HepG2 (cell line): ENCODE measurements at regions of chr7 and their contacts with region 1.

Region 1: GRCh38 chr7:82572195-82572880 is 128.8 kb upstream of the CACNA2D1 start:
- DNase-seq: peak; percentile 70
- ATAC-seq: peak; percentile 95
- H3K4me3 ChIP-seq: no peak overlapping the region
- H3K27ac ChIP-seq: no peak overlapping the region
- H3K4me1 ChIP-seq: no peaks in the 10 kb centered on the region
- H3K27me3 ChIP-seq: no peaks in the 10 kb centered on the region
- CTCF ChIP-seq: peak; percentile 83
- EP300 ChIP-seq: no peak
- POLR2A ChIP-seq: no peak
- RAD21 ChIP-seq: no peak

Region 2: DNA sequence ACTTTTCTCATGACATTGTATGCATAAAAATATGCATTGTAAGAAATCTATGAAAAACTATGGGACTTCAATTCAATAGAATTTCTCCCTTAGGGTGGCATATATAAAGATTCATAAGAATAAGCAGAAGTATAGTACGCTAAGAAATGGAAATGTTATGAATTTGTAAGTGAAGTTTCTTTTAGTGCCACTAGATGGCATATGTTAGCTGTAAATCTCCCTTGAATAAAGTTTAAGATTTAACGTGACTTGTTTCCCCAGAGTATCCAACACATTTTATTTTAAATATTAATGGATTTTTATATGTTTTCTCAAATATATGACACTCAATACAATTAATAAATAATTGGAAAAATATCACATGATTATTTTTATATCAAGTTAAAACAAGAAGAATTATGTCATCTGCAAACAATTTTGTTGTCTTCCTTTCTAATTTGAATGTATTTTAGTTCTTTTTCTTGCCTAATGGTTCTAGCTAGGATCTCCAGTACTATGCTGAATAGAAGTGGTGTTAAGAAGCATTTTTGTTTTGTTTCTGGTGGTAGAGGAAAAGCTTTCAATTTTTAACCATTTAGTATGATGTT is 1089.6 kb before region 1 on chr7:
- CTCF ChIA-PET with region 1: no interaction called
- POLR2A ChIA-PET with region 1: no interaction called
- in situ Hi-C with region 1: loop called (anchors 25 kb)
- intact Hi-C with region 1: loop called (anchors 1 kb)
- DNase-seq: peak; percentile 4
- ATAC-seq: no peak
- H3K4me3 ChIP-seq: no peak overlapping the region
- H3K27ac ChIP-seq: no peak overlapping the region
- H3K4me1 ChIP-seq: peaks cover 14% of the 10 kb centered on the region
- H3K27me3 ChIP-seq: no peaks in the 10 kb centered on the region
- CTCF ChIP-seq: peak; percentile 47
- EP300 ChIP-seq: no peak
- POLR2A ChIP-seq: no peak
- RAD21 ChIP-seq: no peak

Region 3: DNA sequence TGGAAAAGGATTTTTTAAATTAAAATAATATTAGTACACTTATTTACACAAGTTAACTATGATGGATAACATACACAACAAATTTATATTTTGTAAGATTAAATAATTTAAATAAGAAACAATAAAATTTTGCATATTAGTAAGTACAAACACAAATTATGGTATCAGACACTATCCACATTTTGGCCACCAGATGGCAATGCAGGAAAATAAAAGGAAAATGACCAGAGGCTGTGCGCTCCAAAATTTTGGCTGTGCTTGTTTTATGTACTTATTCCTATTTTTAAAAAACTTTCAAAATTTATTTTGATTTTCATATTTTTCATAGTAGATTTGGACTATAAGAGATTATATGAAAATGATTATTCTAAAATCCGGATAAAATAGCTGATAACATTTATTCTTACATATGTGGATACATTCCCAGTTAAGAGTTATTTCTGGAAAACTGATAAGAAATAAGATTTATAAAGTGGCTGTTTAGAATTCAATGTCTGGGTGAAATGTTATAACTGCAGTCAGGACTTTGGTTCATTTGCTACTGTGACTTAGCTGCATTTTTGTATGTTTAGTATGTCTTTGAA is 527.7 kb before region 1 on chr7:
- CTCF ChIA-PET with region 1: interaction called, 17 read pairs
- POLR2A ChIA-PET with region 1: no interaction called
- in situ Hi-C with region 1: loop called (anchors 10 kb)
- intact Hi-C with region 1: loop called (anchors 1 kb)
- DNase-seq: peak; percentile 21
- ATAC-seq: no peak
- H3K4me3 ChIP-seq: no peak overlapping the region
- H3K27ac ChIP-seq: no peak overlapping the region
- H3K4me1 ChIP-seq: no peaks in the 10 kb centered on the region
- H3K27me3 ChIP-seq: no peaks in the 10 kb centered on the region
- CTCF ChIP-seq: peak; percentile 56
- EP300 ChIP-seq: no peak
- POLR2A ChIP-seq: no peak
- RAD21 ChIP-seq: 0 out of 2 replicates have a peak, but pooled peaks have one; percentile 28

Region 4: GRCh38 chr7:82172017-82172416 is 400.3 kb before region 1 on chr7:
- CTCF ChIA-PET with region 1: no interaction called
- POLR2A ChIA-PET with region 1: no interaction called
- in situ Hi-C with region 1: no loop called
- intact Hi-C with region 1: loop called (anchors 2 kb)
- DNase-seq: no peak
- ATAC-seq: no peak
- H3K4me3 ChIP-seq: no peak overlapping the region
- H3K27ac ChIP-seq: no peak overlapping the region
- H3K4me1 ChIP-seq: no peaks in the 10 kb centered on the region
- H3K27me3 ChIP-seq: no peaks in the 10 kb centered on the region
- CTCF ChIP-seq: no peak
- EP300 ChIP-seq: no peak
- POLR2A ChIP-seq: no peak
- RAD21 ChIP-seq: no peak

Region 5: GRCh38 chr7:82234457-82235049 is 337.8 kb before region 1 on chr7:
- CTCF ChIA-PET with region 1: interaction called, 5 read pairs
- POLR2A ChIA-PET with region 1: no interaction called
- in situ Hi-C with region 1: no loop called
- intact Hi-C with region 1: loop called (anchors 1 kb)
- DNase-seq: peak; percentile 16
- ATAC-seq: no peak
- H3K4me3 ChIP-seq: no peak overlapping the region
- H3K27ac ChIP-seq: no peak overlapping the region
- H3K4me1 ChIP-seq: no peaks in the 10 kb centered on the region
- H3K27me3 ChIP-seq: no peaks in the 10 kb centered on the region
- CTCF ChIP-seq: peak; percentile 39
- EP300 ChIP-seq: no peak
- POLR2A ChIP-seq: no peak
- RAD21 ChIP-seq: no peak

Region 6: GRCh38 chr7:82481499-82482097 is 90.7 kb before region 1 on chr7:
- CTCF ChIA-PET with region 1: no interaction called
- POLR2A ChIA-PET with region 1: no interaction called
- in situ Hi-C with region 1: no loop called
- intact Hi-C with region 1: no loop called
- DNase-seq: peak; percentile 2
- ATAC-seq: no peak
- H3K4me3 ChIP-seq: no peak overlapping the region
- H3K27ac ChIP-seq: no peak overlapping the region
- H3K4me1 ChIP-seq: no peaks in the 10 kb centered on the region
- H3K27me3 ChIP-seq: no peaks in the 10 kb centered on the region
- CTCF ChIP-seq: peak; percentile 52
- EP300 ChIP-seq: no peak
- POLR2A ChIP-seq: no peak
- RAD21 ChIP-seq: no peak

Region 7: GRCh38 chr7:82729172-82730030 is 157.1 kb after region 1 on chr7:
- CTCF ChIA-PET with region 1: no interaction called
- POLR2A ChIA-PET with region 1: no interaction called
- in situ Hi-C with region 1: no loop called
- intact Hi-C with region 1: loop called (anchors 2 kb)
- DNase-seq: peak; percentile 12
- ATAC-seq: peak; percentile 56; the same call in 2 of the 3 replicates
- H3K4me3 ChIP-seq: no peak overlapping the region
- H3K27ac ChIP-seq: no peak overlapping the region
- H3K4me1 ChIP-seq: no peaks in the 10 kb centered on the region
- H3K27me3 ChIP-seq: no peaks in the 10 kb centered on the region
- CTCF ChIP-seq: peak; percentile 54
- EP300 ChIP-seq: no peak
- POLR2A ChIP-seq: no peak
- RAD21 ChIP-seq: no peak